PC-9 (cell line): ENCODE measurements at regions of chr5 and their contacts with region 1.

Region 1: GRCh38 chr5:30343707-30344106 is 849.8 kb upstream of the CDH6 start:
- DNase-seq: no peak
- H3K4me3 ChIP-seq: no peak overlapping the region
- H3K27ac ChIP-seq: no peak overlapping the region
- H3K4me1 ChIP-seq: no peaks in the 10 kb centered on the region
- H3K27me3 ChIP-seq: no peaks in the 10 kb centered on the region
- CTCF ChIP-seq: no peak

Region 2: DNA sequence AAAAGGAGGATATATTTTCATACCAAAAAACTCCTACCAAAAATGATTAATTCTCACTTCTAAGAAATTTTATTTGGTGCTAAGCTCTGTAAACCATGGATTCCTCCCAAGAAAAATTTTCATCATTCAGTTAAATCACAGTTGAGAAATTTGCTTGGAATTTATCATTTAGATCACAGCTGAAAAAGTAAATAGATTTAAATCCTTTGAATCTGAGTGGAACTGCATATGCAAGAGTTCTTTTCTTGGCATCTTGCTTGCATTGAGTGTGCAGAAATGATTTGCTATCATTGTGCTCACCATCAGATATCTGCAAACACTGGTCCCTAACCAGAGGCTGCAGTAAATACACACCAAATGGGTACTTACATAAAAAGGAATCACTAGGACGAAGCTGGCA is 13.7 kb after region 1 on chr5:
- CTCF ChIA-PET with region 1: no interaction called
- POLR2A ChIA-PET with region 1: no interaction called
- intact Hi-C with region 1: no loop called
- DNase-seq: no peak
- H3K4me3 ChIP-seq: no peak overlapping the region
- H3K27ac ChIP-seq: no peak overlapping the region
- H3K4me1 ChIP-seq: no peaks in the 10 kb centered on the region
- H3K27me3 ChIP-seq: no peaks in the 10 kb centered on the region
- CTCF ChIP-seq: no peak

Region 3: GRCh38 chr5:30387974-30388632 is 44.4 kb after region 1 on chr5:
- CTCF ChIA-PET with region 1: no interaction called
- POLR2A ChIA-PET with region 1: interaction called, 10 read pairs
- intact Hi-C with region 1: no loop called
- DNase-seq: no peak
- H3K4me3 ChIP-seq: no peak overlapping the region
- H3K27ac ChIP-seq: no peak overlapping the region
- H3K4me1 ChIP-seq: no peaks in the 10 kb centered on the region
- H3K27me3 ChIP-seq: no peaks in the 10 kb centered on the region
- CTCF ChIP-seq: no peak

Region 4: DNA sequence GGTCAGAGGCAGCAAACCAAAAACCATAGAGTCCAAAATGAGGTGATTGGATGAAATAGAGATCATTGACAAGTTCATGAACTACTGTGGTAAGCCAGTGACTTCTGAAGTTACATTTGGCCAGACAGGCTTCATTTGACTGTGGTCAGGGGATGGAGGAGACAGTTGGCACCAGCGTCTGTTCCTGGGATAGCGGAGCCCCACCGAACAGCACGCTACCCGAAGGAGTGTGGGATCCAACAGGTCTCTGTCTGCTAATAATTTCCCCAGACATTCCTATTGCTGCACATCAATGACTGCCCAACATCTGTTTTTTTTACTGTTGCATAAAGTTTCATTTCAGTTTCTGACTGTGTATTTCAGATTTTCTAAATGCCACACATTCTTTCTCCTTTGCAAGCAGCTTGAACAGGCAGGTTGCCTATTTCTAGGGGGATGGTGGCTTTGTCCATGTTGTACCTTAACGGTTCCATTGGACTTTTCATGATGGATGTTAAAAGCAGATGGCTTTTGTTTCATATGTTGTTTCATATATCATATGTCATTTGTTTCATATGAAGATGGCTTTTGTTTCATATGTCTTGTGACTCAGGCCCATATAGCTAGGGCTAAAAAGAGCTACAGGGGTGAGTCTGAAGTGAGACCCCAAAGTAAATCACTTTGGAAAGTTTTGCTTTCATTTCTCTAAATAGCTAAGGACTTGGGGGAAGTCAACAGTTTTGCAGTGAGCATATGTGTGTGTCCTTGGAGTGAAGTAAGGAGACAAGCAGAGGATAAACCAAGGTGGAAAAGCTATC is 1649.7 kb after region 1 on chr5:
- CTCF ChIA-PET with region 1: no interaction called
- POLR2A ChIA-PET with region 1: no interaction called
- intact Hi-C with region 1: no loop called
- DNase-seq: no peak
- H3K4me3 ChIP-seq: no peak overlapping the region
- H3K27ac ChIP-seq: no peak overlapping the region
- H3K4me1 ChIP-seq: no peaks in the 10 kb centered on the region
- H3K27me3 ChIP-seq: peaks cover 87% of the 10 kb centered on the region
- CTCF ChIP-seq: no peak